Ovary (tissue), 10 donors: ENCODE measurements at regions of chr6 and their contacts with region 1.

Region 1: GRCh38 chr6:87589693-87590549 is at the starts of genes ORC3 and RARS2:
- DNase-seq: peak; percentile 94 to 97 (median 96)
- H3K4me3 ChIP-seq: peak within 1 kb of the TSS; percentile 52
- H3K27ac ChIP-seq: peak within 1 kb of the TSS in 1 of 2 donors; percentile 37
- H3K4me1 ChIP-seq: peaks cover 20% of the 10 kb centered on the region
- H3K27me3 ChIP-seq: no peaks in the 10 kb centered on the region
- CTCF ChIP-seq: no peak
- EP300 ChIP-seq: no peak
- POLR2A ChIP-seq: peak; percentile 83
- total RNA-seq, gene ORC3: 18.2 to 35.8 (median 26.7) TPM
- total RNA-seq, gene RARS2: 14.0 to 30.6 (median 24.6) TPM

Region 2: DNA sequence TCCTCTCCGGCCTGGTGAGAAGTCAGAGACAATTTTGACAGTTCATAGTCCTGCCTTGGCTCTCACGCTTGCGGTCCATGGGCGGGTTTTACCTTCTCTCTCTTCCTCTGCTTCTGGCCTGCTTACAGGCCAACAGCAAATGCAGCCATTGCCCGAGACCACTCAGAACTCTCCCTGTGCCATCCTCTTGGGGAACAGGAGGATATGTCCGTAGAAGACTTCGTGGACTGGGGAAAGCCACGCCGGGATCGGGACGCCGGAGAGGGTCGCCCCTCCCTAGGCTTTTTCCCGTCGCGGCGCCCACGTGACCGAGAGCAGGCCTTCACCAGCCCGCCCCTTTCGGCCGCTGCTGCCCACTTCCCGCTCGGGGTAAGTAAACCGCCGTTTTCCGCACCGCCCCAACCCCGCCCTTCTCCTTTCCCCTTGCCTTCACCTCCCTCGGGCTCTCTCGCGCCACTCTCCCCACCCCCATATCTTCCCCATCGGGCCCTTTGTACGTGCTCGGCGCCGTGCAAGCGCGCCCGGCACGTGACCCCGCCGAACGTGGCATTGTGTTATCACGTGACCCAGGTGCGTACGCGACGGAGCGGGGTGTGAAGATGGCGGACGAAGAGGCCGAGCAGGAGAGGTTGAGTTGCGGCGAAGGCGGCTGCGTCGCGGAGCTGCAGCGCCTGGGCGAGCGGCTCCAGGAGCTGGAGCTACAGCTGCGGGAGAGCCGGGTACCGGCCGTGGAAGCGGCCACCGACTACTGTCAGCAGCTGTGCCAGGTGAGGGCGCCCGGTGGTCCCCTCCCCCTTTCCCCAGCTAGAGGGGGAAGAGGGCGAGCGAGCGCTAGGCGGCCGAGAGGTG is 434.7 kb before region 1 on chr6 and contains the start of gene ZNF292:
- intact Hi-C with region 1: loop called in 1 of 4 experiments (anchors 10 kb)
- DNase-seq: peak; percentile 93 to 96 (median 94)
- H3K4me3 ChIP-seq: peak within 1 kb of the TSS; percentile 85
- H3K27ac ChIP-seq: peak within 1 kb of the TSS; percentile 96 to 99
- H3K4me1 ChIP-seq: peaks cover 3% of the 10 kb centered on the region
- H3K27me3 ChIP-seq: no peaks in the 10 kb centered on the region
- CTCF ChIP-seq: peak in 1 of 3 donors; percentile 37
- EP300 ChIP-seq: peak; percentile 2
- POLR2A ChIP-seq: peak; percentile 56
- total RNA-seq, gene ZNF292: 37.6 to 158 (median 82.7) TPM

Region 3: DNA sequence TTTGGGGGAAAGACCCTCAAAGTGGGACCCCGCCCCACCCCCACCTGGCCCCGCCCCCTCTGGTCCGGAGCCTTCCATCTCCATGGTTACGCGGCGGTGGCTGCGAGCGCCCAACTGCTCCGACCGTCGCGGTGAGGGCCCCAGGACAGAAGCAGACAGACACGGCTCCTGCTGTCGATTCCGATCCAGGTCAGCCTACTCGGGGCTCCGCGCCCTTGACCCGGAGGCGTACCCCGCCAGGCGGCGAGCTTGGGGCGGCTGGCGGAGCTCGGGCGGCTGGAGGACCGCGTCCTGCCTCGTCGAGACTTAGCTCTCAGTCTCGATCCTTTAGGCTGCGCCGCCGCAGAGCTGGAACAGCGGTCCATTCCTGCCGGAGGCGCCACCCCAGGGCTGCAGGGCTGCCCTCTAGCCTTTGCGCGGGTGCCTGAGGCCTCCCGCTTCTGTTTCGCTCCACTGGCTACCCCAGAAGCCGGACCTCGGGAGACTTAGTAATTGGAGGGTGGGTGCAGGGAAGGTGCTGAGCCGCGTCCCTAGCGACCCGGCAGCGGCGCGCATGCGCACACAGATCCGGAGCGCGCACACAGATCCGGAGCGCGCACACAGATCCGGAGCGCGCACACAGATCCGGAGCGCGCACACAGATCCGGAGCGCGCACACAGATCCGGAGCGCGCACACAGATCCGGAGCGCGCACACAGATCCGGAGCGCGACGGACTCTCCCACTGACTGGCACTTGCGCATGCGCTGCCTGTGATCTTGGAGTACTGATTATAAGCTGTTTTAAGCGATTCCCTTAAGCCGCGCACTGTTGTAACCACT is 181.8 kb before region 1 on chr6 and contains the start of gene CFAP206:
- intact Hi-C with region 1: loop called in 1 of 4 experiments (anchors 10 kb)
- DNase-seq: peak; percentile 76 to 84 (median 80)
- H3K4me3 ChIP-seq: peak within 1 kb of the TSS; percentile 76
- H3K27ac ChIP-seq: peak within 1 kb of the TSS; percentile 2 to 59
- H3K4me1 ChIP-seq: no peaks in the 10 kb centered on the region
- H3K27me3 ChIP-seq: no peaks in the 10 kb centered on the region
- CTCF ChIP-seq: no peak
- EP300 ChIP-seq: no peak
- POLR2A ChIP-seq: no peak
- total RNA-seq, gene CFAP206: 0.25 to 9.5 (median 0.73) TPM in 6 of 7 donors, not detected in the other